ENCODE measurements at regions of chr2 and their contacts with region 1.

Region 1: DNA sequence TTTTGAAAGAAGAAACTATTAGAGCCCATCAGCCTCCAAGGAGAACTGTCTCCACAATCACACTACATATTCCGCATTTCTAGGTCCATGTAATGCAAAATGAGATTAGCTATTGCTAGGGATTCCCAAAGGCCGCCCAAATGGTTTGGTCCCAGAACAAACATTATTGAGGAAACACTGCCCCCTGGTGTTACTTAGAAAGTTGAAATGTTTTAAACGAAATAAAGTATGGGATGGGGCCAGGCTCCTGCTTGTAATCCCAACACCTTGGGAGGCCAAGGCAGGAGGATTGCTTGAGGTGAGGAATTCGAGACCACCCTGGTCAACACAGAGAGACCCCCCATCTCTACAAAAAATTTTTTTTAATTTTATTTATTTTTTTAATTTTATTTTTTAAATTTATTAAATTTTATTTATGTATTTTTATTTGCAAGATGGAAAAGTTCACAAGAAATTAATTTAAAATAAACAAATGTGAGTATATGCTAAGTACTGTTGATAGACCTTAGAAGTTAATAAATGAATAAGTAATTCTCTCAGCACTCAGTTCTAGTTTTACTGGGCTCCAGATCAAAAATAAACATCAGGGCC is 5.5 kb downstream of the NHEJ1 start:
- DNase-seq: peak; percentile 27
- H3K4me3 Mint-ChIP-seq: no peak overlapping the region
- H3K27ac Mint-ChIP-seq: no peak overlapping the region
- H3K4me1 Mint-ChIP-seq: peaks cover 9% of the 10 kb centered on the region
- H3K27me3 Mint-ChIP-seq: no peaks in the 10 kb centered on the region

Region 2: GRCh38 chr2:218839430-218839829 is 315.7 kb before region 1 on chr2:
- CTCF ChIA-PET with region 1: no interaction called
- POLR2A ChIA-PET with region 1: no interaction called
- DNase-seq: no peak
- H3K4me3 Mint-ChIP-seq: no peak overlapping the region
- H3K27ac Mint-ChIP-seq: no peak overlapping the region
- H3K4me1 Mint-ChIP-seq: no peaks in the 10 kb centered on the region
- H3K27me3 Mint-ChIP-seq: peaks cover 42% of the 10 kb centered on the region

Region 3: DNA sequence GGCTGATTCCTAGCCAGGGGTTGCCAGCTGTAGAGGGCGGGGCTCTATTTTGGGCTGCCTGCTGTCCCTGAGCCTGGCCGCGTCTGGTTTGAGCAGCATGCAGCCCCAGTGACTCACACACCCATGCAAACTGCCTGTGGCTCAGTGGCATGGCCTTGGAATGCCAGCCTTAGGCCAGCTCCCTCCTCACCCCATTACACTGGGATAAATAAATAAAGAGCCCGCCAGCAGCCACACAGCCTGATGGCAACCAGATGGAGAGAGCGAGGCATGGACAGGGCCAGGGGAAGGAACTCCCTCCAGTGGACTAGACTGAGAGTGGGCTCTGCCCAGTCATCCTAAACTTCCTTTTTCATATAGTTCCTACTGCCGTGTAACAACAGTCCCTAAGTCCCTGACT is 12.8 kb before region 1 on chr2:
- CTCF ChIA-PET with region 1: interaction called, 10 read pairs
- POLR2A ChIA-PET with region 1: no interaction called
- DNase-seq: no peak
- H3K4me3 Mint-ChIP-seq: no peak overlapping the region
- H3K27ac Mint-ChIP-seq: no peak overlapping the region
- H3K4me1 Mint-ChIP-seq: no peaks in the 10 kb centered on the region
- H3K27me3 Mint-ChIP-seq: no peaks in the 10 kb centered on the region

Region 4: DNA sequence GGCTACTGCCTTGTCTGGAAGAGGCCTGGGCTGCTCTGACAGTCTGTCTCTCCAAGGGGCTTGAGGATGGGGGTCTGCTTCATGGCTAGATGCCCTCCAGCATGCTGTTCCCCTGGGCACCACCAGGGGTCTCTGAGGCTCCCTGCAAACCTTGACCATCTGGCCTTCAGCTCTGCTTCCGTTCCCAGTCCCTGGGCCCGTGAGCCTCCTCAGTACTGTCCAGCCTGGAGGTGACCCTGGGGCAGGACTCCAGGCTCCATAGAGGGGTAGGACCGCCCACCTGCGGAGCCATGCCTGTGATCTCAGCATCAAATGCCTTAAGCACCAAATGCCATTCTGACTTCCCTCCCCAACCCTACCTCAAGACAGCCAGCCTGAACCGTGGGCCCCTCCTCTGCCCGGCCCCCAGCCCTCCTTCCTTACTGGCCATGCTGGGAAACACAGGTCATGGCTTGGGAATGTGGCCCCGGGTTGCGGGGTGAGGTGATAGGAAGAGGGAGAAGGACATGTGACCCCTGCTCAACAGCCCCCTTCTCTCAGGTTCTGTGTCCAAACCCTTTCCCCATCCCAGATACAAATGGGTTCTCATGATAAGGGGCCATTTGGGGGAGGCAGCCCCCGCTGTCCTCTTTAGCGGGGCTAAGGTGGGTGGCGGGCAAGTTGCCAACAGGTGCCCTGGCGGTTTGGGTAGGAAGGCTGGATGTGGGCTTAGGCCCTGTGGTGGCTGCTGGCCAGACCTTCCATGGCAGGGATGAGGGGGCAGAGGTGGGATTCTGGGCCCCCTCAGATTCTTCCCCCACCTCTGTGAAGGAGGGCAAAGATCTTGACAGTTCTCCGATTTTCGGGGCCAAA is 304.5 kb after region 1 on chr2:
- CTCF ChIA-PET with region 1: no interaction called
- POLR2A ChIA-PET with region 1: no interaction called
- DNase-seq: peak; percentile 39
- H3K4me3 Mint-ChIP-seq: no peak overlapping the region
- H3K27ac Mint-ChIP-seq: no peak overlapping the region
- H3K4me1 Mint-ChIP-seq: peaks cover 5% of the 10 kb centered on the region
- H3K27me3 Mint-ChIP-seq: no peaks in the 10 kb centered on the region

Measured in activated CD4-positive, alpha-beta memory T cell treated with anti-CD3 and anti-CD28 coated beads, Interleukin-2, amount 10 ng/mL, durations not matched to agents 7 days and 5 days (primary cell).